ENCODE measurements at regions of chr1 and their contacts with region 1.

Region 1: GRCh38 chr1:168342572-168343280 is 62.0 kb downstream of the TBX19 start:
- DNase-seq: peak; percentile 92
- H3K4me3 Mint-ChIP-seq: no peak overlapping the region
- H3K27ac Mint-ChIP-seq: peak overlapping the region; percentile 42
- H3K4me1 Mint-ChIP-seq: peaks cover 35% of the 10 kb centered on the region
- H3K27me3 Mint-ChIP-seq: no peaks in the 10 kb centered on the region

Region 2: GRCh38 chr1:168225476-168226190 is 117.1 kb before region 1 on chr1 and contains the start of gene SFT2D2:
- CTCF ChIA-PET with region 1: interaction called, 13 read pairs
- POLR2A ChIA-PET with region 1: no interaction called
- intact Hi-C with region 1: loop called (anchors 2 kb)
- DNase-seq: peak; percentile 83
- H3K4me3 Mint-ChIP-seq: peak within 1 kb of the TSS; percentile 91
- H3K27ac Mint-ChIP-seq: peak within 1 kb of the TSS; percentile 84
- H3K4me1 Mint-ChIP-seq: peaks cover 43% of the 10 kb centered on the region
- H3K27me3 Mint-ChIP-seq: peaks cover 7% of the 10 kb centered on the region
- total RNA-seq, gene SFT2D2: 52.3 to 52.9 TPM

Region 3: GRCh38 chr1:168365719-168366479 is 23.2 kb after region 1 on chr1:
- CTCF ChIA-PET with region 1: interaction called, 126 read pairs
- POLR2A ChIA-PET with region 1: no interaction called
- intact Hi-C with region 1: loop called (anchors 1 kb)
- DNase-seq: no peak
- H3K4me3 Mint-ChIP-seq: no peak overlapping the region
- H3K27ac Mint-ChIP-seq: no peak overlapping the region
- H3K4me1 Mint-ChIP-seq: peaks cover 32% of the 10 kb centered on the region
- H3K27me3 Mint-ChIP-seq: no peaks in the 10 kb centered on the region

Region 4: GRCh38 chr1:168408536-168409242 is 66.0 kb after region 1 on chr1:
- CTCF ChIA-PET with region 1: interaction called, 10 read pairs
- POLR2A ChIA-PET with region 1: interaction called, 3 read pairs
- intact Hi-C with region 1: loop called (anchors 2 kb)
- DNase-seq: peak; percentile 75
- H3K4me3 Mint-ChIP-seq: peak overlapping the region; percentile 9
- H3K27ac Mint-ChIP-seq: peak overlapping the region; percentile 53
- H3K4me1 Mint-ChIP-seq: peaks cover 40% of the 10 kb centered on the region
- H3K27me3 Mint-ChIP-seq: no peaks in the 10 kb centered on the region

Region 5: DNA sequence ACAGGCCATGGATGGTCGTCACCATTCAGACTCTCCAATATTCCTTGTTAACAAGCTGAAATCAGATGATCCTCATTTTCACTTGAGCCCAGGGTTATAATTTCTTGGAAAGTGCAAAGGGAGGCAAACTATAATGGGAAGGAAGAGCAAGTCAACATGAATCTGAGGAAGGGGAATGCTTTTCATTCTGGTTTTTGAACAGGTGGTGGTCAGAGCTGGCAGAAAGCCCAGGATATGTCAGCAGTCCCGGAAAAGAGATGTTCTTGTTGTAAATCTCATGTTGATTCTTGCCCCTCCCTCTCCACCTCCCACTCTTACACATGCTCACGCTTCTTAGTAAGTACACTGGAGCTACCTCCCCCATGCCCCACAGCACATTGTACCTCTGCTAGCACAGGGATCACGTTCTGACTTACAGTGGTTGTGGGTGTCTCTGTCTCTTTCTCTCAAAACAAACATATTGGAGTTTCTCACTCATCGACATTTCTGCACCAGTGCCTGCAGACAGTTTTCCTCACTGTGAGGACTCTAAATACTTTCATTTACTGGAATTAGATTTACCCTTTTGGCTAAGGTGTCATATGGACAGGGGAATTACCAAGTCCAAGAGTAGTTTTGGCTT is 123.5 kb after region 1 on chr1:
- CTCF ChIA-PET with region 1: interaction called, 13 read pairs
- POLR2A ChIA-PET with region 1: no interaction called
- intact Hi-C with region 1: no loop called
- DNase-seq: peak; percentile 81
- H3K4me3 Mint-ChIP-seq: no peak overlapping the region
- H3K27ac Mint-ChIP-seq: peak overlapping the region; percentile 75
- H3K4me1 Mint-ChIP-seq: peaks cover 58% of the 10 kb centered on the region
- H3K27me3 Mint-ChIP-seq: no peaks in the 10 kb centered on the region

Region 6: DNA sequence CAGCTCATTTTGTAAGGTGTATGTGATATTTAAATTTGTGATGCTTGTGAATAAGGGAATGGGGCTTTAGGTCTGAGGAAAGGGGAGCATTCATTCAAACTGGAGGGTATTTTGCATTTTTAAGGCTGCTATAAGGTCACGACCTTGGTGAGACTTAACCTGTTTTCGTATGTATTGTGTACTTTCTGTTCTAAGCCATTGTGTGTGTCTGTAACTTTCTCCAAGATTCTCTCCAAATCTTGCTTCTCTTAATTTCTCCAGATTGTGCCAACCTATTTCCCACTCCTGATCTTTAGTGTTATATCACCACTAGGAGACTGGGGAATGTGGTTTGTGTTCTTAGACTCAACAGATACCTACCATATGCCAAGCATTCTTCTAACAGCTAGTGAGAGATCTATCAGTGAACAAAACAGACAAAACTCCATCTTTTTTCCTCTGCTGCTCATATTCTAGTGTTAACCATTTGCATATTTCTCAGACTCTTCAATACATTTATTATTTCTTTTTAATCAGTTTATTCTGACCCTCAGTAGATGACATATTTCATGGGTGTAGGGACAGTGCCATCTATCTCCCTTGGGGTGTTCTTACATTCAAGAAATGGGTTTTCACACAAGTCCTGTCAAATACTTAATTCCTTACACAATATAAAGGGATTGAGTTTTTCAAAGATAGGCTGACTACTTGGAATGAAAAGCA is 791.2 kb after region 1 on chr1:
- CTCF ChIA-PET with region 1: no interaction called
- POLR2A ChIA-PET with region 1: no interaction called
- intact Hi-C with region 1: loop called (anchors 10 kb)
- DNase-seq: no peak
- H3K4me3 Mint-ChIP-seq: no peak overlapping the region
- H3K27ac Mint-ChIP-seq: no peak overlapping the region
- H3K4me1 Mint-ChIP-seq: peaks cover 5% of the 10 kb centered on the region
- H3K27me3 Mint-ChIP-seq: no peaks in the 10 kb centered on the region